Heart right ventricle (tissue), 16 donors: ENCODE measurements at regions of chr19 and their contacts with region 1.

Region 1: GRCh38 chr19:2610637-2611482 is 91.6 kb downstream of the GNG7 start:
- DNase-seq: peak; percentile 92 to 96
- ATAC-seq: peak; percentile 87 to 96 (median 93)
- H3K4me3 ChIP-seq: peak overlapping the region in 9 of 10 donors; percentile 19 to 57 (median 52)
- H3K27ac ChIP-seq: peak overlapping the region; percentile 72 to 91 (median 86)
- H3K4me1 ChIP-seq: peaks cover 0 to 42% (median 21%) of the 10 kb centered on the region in 9 donors
- H3K27me3 ChIP-seq: peaks cover 0 to 5% (median 0%) of the 10 kb centered on the region in 7 donors
- CTCF ChIP-seq: peak; percentile 92 to 99 (median 98)

Region 2: DNA sequence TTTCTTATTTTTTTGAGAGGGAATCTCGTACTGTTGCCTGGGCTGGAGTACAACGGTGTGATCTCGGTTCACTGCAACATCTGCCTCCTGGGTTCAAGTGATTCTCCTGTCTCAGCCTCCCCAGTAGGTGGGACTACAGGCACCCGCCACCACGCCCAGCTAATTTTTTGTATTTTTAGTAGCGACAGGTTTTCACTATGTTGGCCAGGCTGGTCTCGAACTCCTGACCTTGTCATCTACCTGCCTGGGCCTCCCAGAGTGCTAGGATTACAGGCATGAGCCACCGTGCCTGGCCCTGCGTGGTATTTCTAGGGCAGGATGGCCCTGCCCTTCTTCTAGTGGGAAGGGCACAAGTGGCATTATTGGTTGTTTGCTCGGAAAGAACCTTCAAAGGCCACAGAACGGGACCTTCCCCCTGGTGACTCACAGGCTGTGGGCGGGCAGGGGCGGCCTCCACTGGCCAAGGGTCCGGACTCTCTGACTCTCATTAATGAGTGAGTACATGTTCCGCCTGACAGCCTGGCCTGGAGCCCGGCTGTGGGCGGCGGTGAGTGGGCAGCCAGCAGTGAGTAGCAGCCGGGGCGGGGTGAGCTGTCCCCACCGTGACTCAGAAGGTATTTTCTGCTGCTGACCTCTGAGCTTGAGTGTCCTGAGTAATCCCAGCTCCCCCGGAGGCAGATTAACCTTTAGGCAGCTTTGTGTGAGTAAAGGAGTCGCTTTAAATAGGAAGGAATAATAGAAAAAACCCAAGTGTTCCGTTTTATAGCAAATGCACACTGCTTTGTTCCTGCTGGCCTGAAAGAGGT is 442.0 kb before region 1 on chr19:
- intact Hi-C with region 1: loop called in 1 of 10 experiments (anchors 10 kb)
- DNase-seq: peak; percentile 94 to 96
- ATAC-seq: peak; percentile 83 to 95 (median 92)
- H3K4me3 ChIP-seq: peak overlapping the region in 6 of 10 donors; percentile 22 to 35 (median 26)
- H3K27ac ChIP-seq: peak overlapping the region; percentile 80 to 95 (median 92)
- H3K4me1 ChIP-seq: peaks cover 59 to 93% (median 86%) of the 10 kb centered on the region in 9 donors
- H3K27me3 ChIP-seq: no peaks in the 10 kb centered on the region
- CTCF ChIP-seq: peak in 1 of 9 donors; percentile 39

Region 3: DNA sequence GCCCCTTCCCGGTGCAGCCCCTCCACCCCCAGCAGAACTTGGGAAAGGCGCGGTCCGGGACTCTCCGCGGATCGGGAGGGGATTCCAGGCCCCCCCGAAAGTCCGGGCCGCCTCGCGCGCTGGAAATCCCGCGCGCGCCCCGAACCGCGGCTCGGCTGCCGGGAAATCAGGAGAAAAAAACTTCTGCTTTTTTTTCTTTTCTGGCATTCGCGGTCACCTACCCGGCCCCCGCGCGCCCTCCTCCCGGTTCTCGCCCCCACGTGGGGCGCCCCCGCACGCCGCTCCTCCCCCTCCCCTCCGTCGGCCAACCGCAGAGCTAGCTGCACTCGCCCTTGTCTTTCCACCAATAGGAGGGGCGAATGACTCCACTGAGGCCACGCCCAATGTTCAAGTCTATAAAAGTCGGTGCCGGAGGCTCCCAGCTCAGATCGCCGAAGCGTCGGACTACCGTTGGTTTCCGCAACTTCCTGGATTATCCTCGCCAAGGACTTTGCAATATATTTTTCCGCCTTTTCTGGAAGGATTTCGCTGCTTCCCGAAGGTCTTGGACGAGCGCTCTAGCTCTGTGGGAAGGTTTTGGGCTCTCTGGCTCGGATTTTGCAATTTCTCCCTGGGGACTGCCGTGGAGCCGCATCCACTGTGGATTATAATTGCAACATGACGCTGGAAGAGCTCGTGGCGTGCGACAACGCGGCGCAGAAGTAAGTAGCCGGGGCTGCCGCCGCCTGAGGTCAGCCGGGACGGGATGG is 135.0 kb before region 1 on chr19 and contains the start of gene GADD45B:
- intact Hi-C with region 1: loop called (anchors 1 to 10 kb)
- DNase-seq: peak; percentile 97 to 98
- ATAC-seq: peak; percentile 77 to 90 (median 86)
- H3K4me3 ChIP-seq: peak within 1 kb of the TSS; percentile 73 to 99 (median 87)
- H3K27ac ChIP-seq: peak within 1 kb of the TSS; percentile 75 to 98 (median 93)
- H3K4me1 ChIP-seq: peaks cover 9 to 50% (median 37%) of the 10 kb centered on the region in 9 donors
- H3K27me3 ChIP-seq: no peaks in the 10 kb centered on the region
- CTCF ChIP-seq: no peak
- total RNA-seq, gene GADD45B: 19.6 to 297 (median 31.3) TPM

Region 4: DNA sequence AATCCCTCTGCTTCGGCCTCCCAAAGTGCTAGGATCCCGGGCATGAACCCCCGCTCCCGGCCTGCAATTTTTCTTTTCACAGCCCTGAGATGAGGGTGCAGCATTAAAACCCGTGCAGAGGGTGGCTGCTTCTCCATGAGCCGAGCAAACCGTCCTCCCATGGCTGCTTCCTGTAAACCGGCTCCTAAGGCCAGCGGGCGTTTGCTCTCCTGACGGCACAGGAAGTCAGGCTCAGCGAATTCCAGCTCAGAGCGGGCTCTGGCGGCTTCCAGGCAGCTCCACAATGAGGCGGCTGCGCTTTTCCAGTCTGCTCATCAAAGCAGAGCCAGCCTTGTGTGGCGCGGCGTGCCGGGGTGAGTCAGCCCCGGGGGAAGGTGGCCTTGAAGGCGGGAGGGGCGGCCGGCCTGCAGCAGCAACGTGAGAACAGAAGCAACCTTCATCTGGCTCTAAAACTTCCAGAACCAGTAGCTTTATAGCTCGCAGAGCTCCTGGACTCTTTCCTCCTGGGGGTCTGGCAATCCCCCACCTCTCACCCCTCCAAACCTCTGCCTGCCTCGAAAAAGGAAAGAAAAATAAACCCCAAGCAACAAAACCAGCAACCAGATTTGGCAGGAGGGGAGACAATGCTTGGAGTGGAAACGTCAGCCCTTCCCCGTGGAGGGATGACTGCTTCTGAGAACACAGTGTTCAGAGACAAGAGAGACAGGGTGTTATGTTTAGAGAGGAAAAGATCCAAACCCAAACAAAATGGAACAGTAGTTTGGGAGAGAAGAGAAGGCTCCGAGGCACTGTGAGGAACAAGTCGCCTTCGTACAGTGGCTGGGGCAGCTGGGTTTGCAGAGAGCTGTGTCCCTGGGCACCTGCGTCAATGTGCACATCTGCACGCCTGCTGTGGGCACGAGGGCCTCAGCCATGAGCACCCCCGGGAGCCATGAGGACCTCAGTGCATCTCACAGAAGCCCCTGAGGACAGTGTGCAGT is 67.1 kb before region 1 on chr19:
- intact Hi-C with region 1: loop called in 2 of 10 experiments (anchors 2 to 5 kb)
- DNase-seq: peak; percentile 92 to 93
- ATAC-seq: peak; percentile 75 to 88 (median 82)
- H3K4me3 ChIP-seq: peak overlapping the region in 8 of 10 donors; percentile 8 to 40 (median 30)
- H3K27ac ChIP-seq: peak overlapping the region; percentile 83 to 97 (median 93)
- H3K4me1 ChIP-seq: peaks cover 35 to 80% (median 74%) of the 10 kb centered on the region in 9 donors
- H3K27me3 ChIP-seq: no peaks in the 10 kb centered on the region
- CTCF ChIP-seq: peak in 5 of 9 donors; percentile 9 to 63 (median 60)

Region 5: GRCh38 chr19:2549701-2550191 is 61.1 kb before region 1 on chr19:
- intact Hi-C with region 1: loop called in 2 of 10 experiments (anchors 2 to 5 kb)
- DNase-seq: peak; percentile 73 to 81
- ATAC-seq: peak in 7 of 8 donors; percentile 15 to 64 (median 46)
- H3K4me3 ChIP-seq: no peak overlapping the region
- H3K27ac ChIP-seq: peak overlapping the region in 9 of 10 donors; percentile 24 to 89 (median 66)
- H3K4me1 ChIP-seq: peaks cover 15 to 75% (median 41%) of the 10 kb centered on the region in 9 donors
- H3K27me3 ChIP-seq: no peaks in the 10 kb centered on the region
- CTCF ChIP-seq: peak in 1 of 9 donors; percentile 3